Ascending aorta (tissue), 2 donors: ENCODE measurements at regions of chr6 and their contacts with region 1.

Region 1: DNA sequence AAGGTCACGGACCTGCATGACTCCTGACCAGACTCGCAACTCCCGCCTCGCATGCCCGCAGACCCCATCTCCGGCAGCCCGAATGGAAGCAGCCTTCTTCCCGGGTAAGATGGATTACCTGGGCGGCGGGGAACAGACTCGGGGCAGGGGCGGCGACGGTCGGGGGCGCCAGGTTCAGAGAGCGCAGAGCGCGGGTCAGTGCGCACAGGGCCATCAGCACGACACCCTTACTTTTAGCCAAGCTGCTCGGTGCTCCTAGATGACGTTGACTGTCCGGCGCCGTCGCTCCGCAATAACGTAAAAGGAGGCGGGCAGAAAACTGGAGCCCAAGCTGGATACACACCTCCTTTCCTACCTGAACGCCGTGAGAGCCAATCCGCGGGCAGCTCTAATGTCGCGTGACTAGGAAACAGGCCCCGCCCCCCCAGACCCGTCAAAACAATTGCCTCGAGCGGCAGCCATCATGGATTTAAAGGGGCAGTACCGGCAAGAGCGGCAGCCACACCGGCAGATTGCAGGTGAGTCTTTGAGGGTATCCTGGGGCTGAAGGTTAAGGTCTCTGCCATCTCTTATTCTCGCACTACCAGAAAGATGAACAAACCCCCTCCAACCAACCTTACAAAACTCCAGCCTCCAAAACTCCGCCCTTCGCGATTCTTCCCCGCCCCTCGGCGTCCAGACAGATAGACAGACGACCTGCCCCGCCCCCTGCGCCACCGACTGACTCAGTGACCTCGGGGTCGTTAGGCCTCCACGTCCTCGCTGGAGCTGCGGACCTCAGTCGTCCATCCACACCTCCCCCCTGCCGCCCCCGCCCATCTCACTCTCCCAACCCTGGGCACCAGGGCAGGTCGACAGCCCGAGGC is at the starts of genes KLC4 and MRPL2:
- DNase-seq: peak; percentile 97 to 99
- H3K4me3 ChIP-seq: peak within 1 kb of the TSS; percentile 84 to 94
- H3K27ac ChIP-seq: peak within 1 kb of the TSS; percentile 78 to 84
- H3K4me1 ChIP-seq: peaks cover 12 to 25% of the 10 kb centered on the region in 2 donors
- H3K27me3 ChIP-seq: no peaks in the 10 kb centered on the region
- CTCF ChIP-seq: no peak
- total RNA-seq, gene KLC4: 17.8 TPM
- total RNA-seq, gene MRPL2: 42.3 TPM

Region 2: GRCh38 chr6:42984001-42984923 is 75.1 kb before region 1 on chr6 and contains the start of gene PPP2R5D:
- intact Hi-C with region 1: loop called (anchors 1 kb)
- DNase-seq: peak; percentile 95 to 99
- H3K4me3 ChIP-seq: peak within 1 kb of the TSS; percentile 69 to 99
- H3K27ac ChIP-seq: peak within 1 kb of the TSS; percentile 76 to 92
- H3K4me1 ChIP-seq: peaks cover 18 to 47% of the 10 kb centered on the region in 2 donors
- H3K27me3 ChIP-seq: no peaks in the 10 kb centered on the region
- CTCF ChIP-seq: no peak
- total RNA-seq, gene PPP2R5D: 27.7 TPM

Region 3: GRCh38 chr6:43021270-43022047 is 37.9 kb before region 1 on chr6 and contains the start of gene RRP36:
- intact Hi-C with region 1: loop called (anchors 1 kb)
- DNase-seq: peak; percentile 35 to 90
- H3K4me3 ChIP-seq: peak within 1 kb of the TSS; percentile 77 to 98
- H3K27ac ChIP-seq: peak within 1 kb of the TSS; percentile 79 to 95
- H3K4me1 ChIP-seq: peaks cover 15 to 27% of the 10 kb centered on the region in 2 donors
- H3K27me3 ChIP-seq: no peaks in the 10 kb centered on the region
- CTCF ChIP-seq: no peak
- total RNA-seq, gene RRP36: 20.6 TPM

Region 4: DNA sequence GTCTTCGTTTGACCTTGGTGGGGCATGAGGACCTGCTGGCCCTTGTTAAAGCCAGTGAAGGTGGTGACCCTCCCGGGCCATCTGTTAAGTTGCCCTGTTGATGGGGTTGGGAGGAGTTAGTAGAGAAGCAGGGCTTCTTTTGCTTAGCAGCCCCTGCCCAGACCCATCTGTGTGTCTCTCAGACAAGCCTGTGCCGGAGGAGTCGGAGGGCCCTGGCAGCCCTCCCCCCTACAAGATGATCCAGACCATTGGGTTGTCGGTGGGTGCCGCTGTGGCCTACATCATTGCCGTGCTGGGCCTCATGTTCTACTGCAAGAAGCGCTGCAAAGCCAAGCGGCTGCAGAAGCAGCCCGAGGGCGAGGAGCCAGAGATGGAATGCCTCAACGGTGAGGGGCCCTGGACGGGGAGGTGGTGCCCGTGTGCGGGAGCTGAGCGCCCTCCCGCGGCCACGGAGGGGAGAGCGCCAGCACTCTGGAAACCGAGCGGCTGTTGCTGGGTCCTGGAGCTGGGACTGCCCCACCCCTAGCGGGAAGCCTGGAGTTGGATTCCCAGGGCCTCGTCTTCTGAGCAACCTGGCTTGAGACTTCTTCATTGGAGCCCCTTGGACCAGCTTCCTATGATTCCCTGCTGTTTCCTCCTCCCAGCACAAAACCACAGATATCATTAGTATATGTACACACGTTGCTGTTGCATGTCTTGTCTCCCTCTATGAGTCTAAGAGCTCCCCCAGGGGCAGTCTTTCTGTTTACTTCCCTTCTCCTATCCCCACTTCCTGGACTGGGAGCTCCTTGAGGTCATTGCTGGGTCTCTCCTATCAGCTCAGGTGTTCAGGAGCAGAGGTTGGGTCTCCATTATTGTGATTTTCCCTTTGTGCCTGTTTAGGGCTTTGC is 84.1 kb after region 1 on chr6:
- intact Hi-C with region 1: loop called (anchors 5 kb)
- DNase-seq: peak; percentile 29 to 93
- H3K4me3 ChIP-seq: no peak overlapping the region
- H3K27ac ChIP-seq: peak overlapping the region in 1 of 2 donors; percentile 9
- H3K4me1 ChIP-seq: peaks cover 0 to 3% of the 10 kb centered on the region in 2 donors
- H3K27me3 ChIP-seq: no peaks in the 10 kb centered on the region
- CTCF ChIP-seq: peak; percentile 94 to 97 (median 95)

Region 5: GRCh38 chr6:43174263-43175112 is 115.1 kb after region 1 on chr6:
- intact Hi-C with region 1: loop called (anchors 1 kb)
- DNase-seq: peak; percentile 98 to 99
- H3K4me3 ChIP-seq: peak overlapping the region; percentile 88 to 95
- H3K27ac ChIP-seq: peak overlapping the region; percentile 98
- H3K4me1 ChIP-seq: peaks cover 8 to 30% of the 10 kb centered on the region in 2 donors
- H3K27me3 ChIP-seq: no peaks in the 10 kb centered on the region
- CTCF ChIP-seq: peak in 1 of 3 experiments; percentile 16